Left lung (tissue), 14 donors: ENCODE measurements at regions of chr14 and their contacts with region 1.

Region 1: GRCh38 chr14:23068476-23069412 is 11.4 kb upstream of the CDH24 start:
- DNase-seq: peak in 3 of 4 donors; percentile 70 to 91 (median 82)
- ATAC-seq: peak; percentile 85
- H3K4me3 ChIP-seq: no peak overlapping the region
- H3K27ac ChIP-seq: peak overlapping the region; percentile 2 to 48
- H3K4me1 ChIP-seq: peaks cover 12 to 48% of the 10 kb centered on the region in 2 donors
- H3K27me3 ChIP-seq: no peaks in the 10 kb centered on the region
- CTCF ChIP-seq: peak; percentile 94 to 99

Region 2: DNA sequence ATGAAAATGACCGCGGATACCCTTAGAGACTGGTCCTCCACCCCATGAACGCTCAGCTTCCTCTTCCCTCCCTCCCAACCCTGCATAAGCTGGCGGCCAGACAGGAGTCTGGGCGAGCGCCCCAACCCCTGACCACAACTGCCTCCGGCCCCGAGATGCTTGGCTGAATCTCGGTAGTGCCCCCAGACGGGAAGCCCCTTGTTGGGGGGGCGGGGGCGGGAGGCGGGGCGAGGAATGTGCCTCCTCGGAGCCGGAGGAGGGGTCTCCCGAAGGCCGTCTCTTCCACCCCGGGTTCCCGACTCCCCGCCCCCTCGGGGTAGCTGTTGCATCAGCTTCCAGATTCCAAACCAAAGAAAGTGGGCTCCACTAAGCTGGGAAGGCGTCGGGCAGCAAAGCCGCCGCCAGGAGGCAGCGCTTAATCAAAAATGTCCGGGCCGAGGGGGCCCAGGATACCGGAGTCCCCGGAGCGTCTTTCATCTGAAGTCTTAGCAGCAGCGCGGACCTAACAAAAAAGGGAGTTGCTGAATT is 246.1 kb before region 1 on chr14:
- intact Hi-C with region 1: no loop called
- DNase-seq: peak; percentile 81 to 93 (median 88)
- ATAC-seq: peak; percentile 75
- H3K4me3 ChIP-seq: peak overlapping the region; percentile 6 to 51
- H3K27ac ChIP-seq: peak overlapping the region; percentile 33 to 80
- H3K4me1 ChIP-seq: peaks cover 15 to 60% of the 10 kb centered on the region in 2 donors
- H3K27me3 ChIP-seq: no peaks in the 10 kb centered on the region
- CTCF ChIP-seq: peak; percentile 73 to 86

Region 3: GRCh38 chr14:23104591-23105347 is 36.0 kb after region 1 on chr14 and contains the start of gene CIROP:
- intact Hi-C with region 1: loop called in 1 of 2 experiments (anchors 5 kb)
- DNase-seq: no peak
- ATAC-seq: no peak
- H3K4me3 ChIP-seq: no peak within 1 kb of the TSS
- H3K27ac ChIP-seq: no peak within 1 kb of the TSS
- H3K4me1 ChIP-seq: peaks cover 0 to 10% of the 10 kb centered on the region in 2 donors
- H3K27me3 ChIP-seq: no peaks in the 10 kb centered on the region
- CTCF ChIP-seq: no peak
- polyA plus RNA-seq, gene CIROP: 0.06 to 0.08 TPM in 2 of 6 donors, not detected in the others